ENCODE measurements at regions of chr13 and their contacts with region 1.

Region 1: DNA sequence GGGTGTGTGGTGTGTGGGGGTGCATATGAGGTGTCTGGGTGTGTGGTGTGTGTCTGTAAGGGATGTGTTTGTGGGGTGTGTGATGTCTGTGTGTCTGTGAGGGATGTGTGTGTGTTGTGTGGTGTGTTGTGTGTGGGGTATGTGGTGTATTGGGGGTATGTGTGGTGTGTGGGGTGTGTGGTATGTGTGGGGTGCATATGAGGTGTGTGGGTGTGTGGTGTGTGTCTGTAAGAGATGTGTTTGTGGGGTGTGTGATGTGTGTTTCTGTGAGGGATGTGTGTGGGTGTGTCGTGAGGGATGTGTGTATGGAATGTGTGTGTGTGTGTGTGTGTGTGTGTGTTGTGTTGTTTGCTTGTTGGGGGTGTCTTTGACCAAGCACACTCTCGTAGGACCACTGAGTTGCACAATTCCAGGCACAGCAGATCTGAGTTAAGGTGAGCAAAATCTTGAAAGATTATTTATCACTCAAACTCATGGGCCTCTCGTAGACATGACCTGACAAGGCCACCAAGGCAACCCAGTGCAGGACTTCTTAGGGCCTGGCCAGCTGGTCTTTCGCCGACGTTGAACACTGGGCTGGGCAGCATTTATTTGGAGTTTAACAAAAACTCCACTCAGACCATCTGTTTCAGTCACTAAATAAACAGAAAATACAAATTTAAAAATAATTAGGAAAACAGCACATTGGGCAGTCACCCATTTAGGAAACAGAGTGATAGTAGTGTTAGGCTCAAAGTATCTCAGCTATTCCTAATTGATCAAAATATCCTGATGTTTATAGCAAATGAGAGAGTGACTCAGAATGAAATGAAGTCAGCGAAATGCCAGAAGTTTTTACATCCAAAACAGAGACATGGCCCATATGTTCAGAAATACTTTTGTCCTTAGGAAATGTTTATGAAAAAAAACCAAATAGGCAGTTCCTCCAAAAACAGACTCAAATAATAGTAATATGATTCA is 301.1 kb downstream of the FGF9 start:
- DNase-seq: peak in 1 of 2 donors; percentile 84
- H3K4me3 ChIP-seq: no peak overlapping the region
- H3K27ac ChIP-seq: no peak overlapping the region
- H3K4me1 ChIP-seq: peaks cover 0 to 3% (median 0%) of the 10 kb centered on the region in 4 donors
- H3K27me3 ChIP-seq: no peaks in the 10 kb centered on the region
- CTCF ChIP-seq: no peak
- EP300 ChIP-seq: no peak
- POLR2A ChIP-seq: no peak

Region 2: GRCh38 chr13:22451327-22451741 is 479.4 kb after region 1 on chr13:
- intact Hi-C with region 1: loop called (anchors 5 kb)
- DNase-seq: peak in 1 of 2 donors; percentile 33
- H3K4me3 ChIP-seq: no peak overlapping the region
- H3K27ac ChIP-seq: no peak overlapping the region
- H3K4me1 ChIP-seq: no peaks in the 10 kb centered on the region
- H3K27me3 ChIP-seq: no peaks in the 10 kb centered on the region
- CTCF ChIP-seq: no peak
- EP300 ChIP-seq: no peak
- POLR2A ChIP-seq: no peak

Measured in stomach (tissue), 19 donors.